ENCODE measurements at regions of chr19 and their contacts with region 1.

Region 1: GRCh38 chr19:41785653-41786052 is 10.7 kb upstream of the CEACAM3 start:
- DNase-seq: peak; percentile 67
- H3K4me3 Mint-ChIP-seq: no peak overlapping the region
- H3K27ac Mint-ChIP-seq: no peak overlapping the region
- H3K4me1 Mint-ChIP-seq: peaks cover 15% of the 10 kb centered on the region
- H3K27me3 Mint-ChIP-seq: peaks cover 34% of the 10 kb centered on the region

Region 2: DNA sequence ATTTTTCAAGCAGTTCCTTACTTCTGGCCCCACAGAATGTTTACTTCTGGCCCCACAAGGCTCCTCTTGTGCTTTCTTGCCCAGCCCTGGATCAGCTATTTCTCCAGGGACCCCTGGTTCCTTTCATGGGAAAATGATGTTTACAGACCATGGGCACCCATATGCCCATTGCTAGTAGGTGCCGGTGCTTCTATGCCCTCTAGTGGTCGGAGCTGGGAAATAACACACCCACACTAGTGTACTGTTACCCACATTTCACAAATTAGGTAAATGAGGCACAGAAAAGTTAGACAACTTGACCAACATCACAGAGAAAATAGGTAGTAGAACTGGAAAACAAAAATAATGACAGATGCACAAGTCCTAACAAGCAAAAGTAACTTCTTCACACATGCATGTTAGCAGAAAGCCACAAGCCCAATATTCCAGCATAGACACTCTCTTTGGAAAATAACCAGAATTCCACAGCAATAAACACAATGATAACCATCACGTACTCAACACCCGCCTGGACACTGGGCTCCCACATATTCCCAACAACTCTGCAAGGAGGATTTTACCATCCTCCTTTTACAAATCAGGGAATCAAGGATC is 31.6 kb before region 1 on chr19:
- intact Hi-C with region 1: loop called (anchors 1 kb)
- DNase-seq: peak; percentile 48
- H3K4me3 Mint-ChIP-seq: no peak overlapping the region
- H3K27ac Mint-ChIP-seq: no peak overlapping the region
- H3K4me1 Mint-ChIP-seq: peaks cover 5% of the 10 kb centered on the region
- H3K27me3 Mint-ChIP-seq: peaks cover 37% of the 10 kb centered on the region

Region 3: GRCh38 chr19:41821003-41821735 is 35.5 kb after region 1 on chr19:
- intact Hi-C with region 1: no loop called
- DNase-seq: peak; percentile 30
- H3K4me3 Mint-ChIP-seq: no peak overlapping the region
- H3K27ac Mint-ChIP-seq: no peak overlapping the region
- H3K4me1 Mint-ChIP-seq: no peaks in the 10 kb centered on the region
- H3K27me3 Mint-ChIP-seq: peaks cover 20% of the 10 kb centered on the region